SK-N-SH (cell line): ENCODE measurements at regions of chr12 and their contacts with region 1.

Region 1: GRCh38 chr12:52213512-52214420 is 19.3 kb upstream of the KRT7 start:
- DNase-seq: peak; percentile 82
- H3K4me3 ChIP-seq: no peak overlapping the region; a peak in 1 of 4 replicates
- H3K27ac ChIP-seq: peak overlapping the region in 1 of 2 experiments; percentile 5; a peak in 1 of 4 replicates
- H3K4me1 ChIP-seq: peaks cover 15 to 68% of the 10 kb centered on the region in 2 experiments; a peak in 3 of 4 replicates
- H3K27me3 ChIP-seq: no peaks in the 10 kb centered on the region
- CTCF ChIP-seq: peak; percentile 95
- EP300 ChIP-seq: 0 out of 4 replicates have a peak, but pooled peaks of 1 of the 2 experiments have one; percentile 32
- RAD21 ChIP-seq: peak; percentile 96

Region 2: GRCh38 chr12:52203075-52203921 is 10.5 kb before region 1 on chr12:
- CTCF ChIA-PET with region 1: no interaction called
- POLR2A ChIA-PET with region 1: interaction called, 13 read pairs
- DNase-seq: peak; percentile 63
- H3K4me3 ChIP-seq: peak overlapping the region in 1 of 2 experiments; percentile 4; a peak in 1 of 4 replicates
- H3K27ac ChIP-seq: peak overlapping the region; percentile 49 to 100
- H3K4me1 ChIP-seq: peaks cover 34 to 84% of the 10 kb centered on the region in 2 experiments
- H3K27me3 ChIP-seq: no peaks in the 10 kb centered on the region
- CTCF ChIP-seq: no peak
- EP300 ChIP-seq: peak in 1 of 2 experiments; percentile 54; a peak in 1 of 4 replicates
- RAD21 ChIP-seq: no peak

Region 3: GRCh38 chr12:52243856-52244614 is 30.3 kb after region 1 on chr12:
- CTCF ChIA-PET with region 1: interaction called, 15 read pairs
- POLR2A ChIA-PET with region 1: no interaction called
- DNase-seq: peak; percentile 60
- H3K4me3 ChIP-seq: no peak overlapping the region
- H3K27ac ChIP-seq: peak overlapping the region; percentile 71 to 91
- H3K4me1 ChIP-seq: peaks cover 23 to 24% of the 10 kb centered on the region in 2 experiments; a peak in 3 of 4 replicates
- H3K27me3 ChIP-seq: no peaks in the 10 kb centered on the region
- CTCF ChIP-seq: no peak
- EP300 ChIP-seq: no peak; a peak in 1 of 4 replicates
- RAD21 ChIP-seq: no peak

Region 4: DNA sequence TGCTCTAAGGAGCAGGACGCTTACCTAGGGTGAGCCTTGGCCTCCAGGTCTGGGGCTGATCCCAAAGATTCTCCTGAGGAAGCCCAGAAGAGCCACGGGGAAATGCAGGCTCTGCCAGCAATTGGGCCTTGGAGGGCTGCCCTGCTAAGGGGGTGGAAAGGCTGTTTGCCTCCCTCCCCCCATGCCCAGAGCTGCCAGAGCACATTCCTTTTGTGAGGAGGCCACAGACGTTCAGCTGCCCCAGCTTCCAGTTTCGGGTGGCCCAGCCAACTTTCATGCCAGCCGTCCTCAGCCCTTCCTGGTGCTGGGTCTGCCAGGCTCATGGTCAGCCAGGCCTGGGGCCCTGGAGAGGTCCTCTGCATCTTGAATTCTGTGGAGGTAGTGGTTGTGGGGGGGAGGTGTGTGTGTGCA is 35.3 kb after region 1 on chr12:
- CTCF ChIA-PET with region 1: interaction called, 16 read pairs
- POLR2A ChIA-PET with region 1: no interaction called
- DNase-seq: no peak
- H3K4me3 ChIP-seq: no peak overlapping the region
- H3K27ac ChIP-seq: peak overlapping the region; percentile 36 to 49; a peak in 3 of 4 replicates
- H3K4me1 ChIP-seq: peaks cover 10 to 21% of the 10 kb centered on the region in 2 experiments; a peak in 3 of 4 replicates
- H3K27me3 ChIP-seq: no peaks in the 10 kb centered on the region
- CTCF ChIP-seq: no peak
- EP300 ChIP-seq: no peak
- RAD21 ChIP-seq: no peak

Region 5: GRCh38 chr12:52307836-52308805 is 94.4 kb after region 1 on chr12:
- CTCF ChIA-PET with region 1: interaction called, 12 read pairs
- POLR2A ChIA-PET with region 1: no interaction called
- DNase-seq: peak; percentile 89
- H3K4me3 ChIP-seq: peak overlapping the region; percentile 29 to 39; a peak in 3 of 4 replicates
- H3K27ac ChIP-seq: no peak overlapping the region
- H3K4me1 ChIP-seq: peaks cover 0 to 9% of the 10 kb centered on the region in 2 experiments; a peak in 1 of 4 replicates
- H3K27me3 ChIP-seq: no peaks in the 10 kb centered on the region
- CTCF ChIP-seq: no peak
- EP300 ChIP-seq: no peak
- RAD21 ChIP-seq: no peak; the same call in 1 of the 2 replicates

Region 6: GRCh38 chr12:52319097-52319496 is 105.3 kb after region 1 on chr12:
- CTCF ChIA-PET with region 1: interaction called, 51 read pairs
- POLR2A ChIA-PET with region 1: no interaction called
- DNase-seq: no peak
- H3K4me3 ChIP-seq: no peak overlapping the region
- H3K27ac ChIP-seq: no peak overlapping the region
- H3K4me1 ChIP-seq: no peaks in the 10 kb centered on the region
- H3K27me3 ChIP-seq: no peaks in the 10 kb centered on the region; the same call in 1 of the 2 replicates
- CTCF ChIP-seq: no peak
- EP300 ChIP-seq: no peak
- RAD21 ChIP-seq: no peak

Region 7: GRCh38 chr12:52333326-52333725 is 119.6 kb after region 1 on chr12:
- CTCF ChIA-PET with region 1: interaction called, 51 read pairs
- POLR2A ChIA-PET with region 1: no interaction called
- DNase-seq: no peak
- H3K4me3 ChIP-seq: no peak overlapping the region
- H3K27ac ChIP-seq: no peak overlapping the region
- H3K4me1 ChIP-seq: peaks cover 0 to 18% of the 10 kb centered on the region in 2 experiments; a peak in 2 of 4 replicates
- H3K27me3 ChIP-seq: peaks cover 3% of the 10 kb centered on the region
- CTCF ChIP-seq: no peak
- EP300 ChIP-seq: peak in 1 of 2 experiments; percentile 30; a peak in 1 of 4 replicates
- RAD21 ChIP-seq: no peak